HEK293 (cell line): ENCODE measurements at regions of chr14 and their contacts with region 1.

Region 1: GRCh38 chr14:69879175-69880043 is at the start of gene SMOC1:
- H3K4me3 ChIP-seq: peak within 1 kb of the TSS; percentile 64
- H3K27ac ChIP-seq: peak within 1 kb of the TSS; percentile 100
- H3K4me1 ChIP-seq: peaks cover 28% of the 10 kb centered on the region
- CTCF ChIP-seq: peak; percentile 39

Region 2: GRCh38 chr14:69708586-69709174 is 170.7 kb before region 1 on chr14:
- CTCF ChIA-PET with region 1: no interaction called
- POLR2A ChIA-PET with region 1: no interaction called
- H3K4me3 ChIP-seq: no peak overlapping the region
- H3K27ac ChIP-seq: no peak overlapping the region
- H3K4me1 ChIP-seq: peaks cover 20% of the 10 kb centered on the region
- CTCF ChIP-seq: no peak

Region 3: DNA sequence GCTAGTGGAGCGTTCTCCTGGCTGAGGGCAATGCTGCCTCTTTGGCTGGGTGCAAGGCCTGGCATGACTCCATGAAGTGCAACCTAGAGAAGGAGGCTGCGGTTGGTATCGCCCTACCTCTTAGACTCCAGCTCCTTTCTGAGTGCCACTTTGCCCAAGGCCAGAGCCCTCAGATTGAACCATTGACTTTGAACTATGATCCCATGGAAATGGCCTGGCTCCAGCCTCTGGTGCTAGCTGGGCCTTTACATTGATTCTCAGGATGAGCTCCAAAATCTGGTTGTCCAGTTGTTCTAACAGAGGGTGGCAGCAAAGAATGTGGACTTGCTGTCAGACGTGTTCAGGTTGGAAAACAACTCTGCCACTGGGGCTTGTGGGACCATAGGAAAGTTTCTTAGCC is 16.3 kb before region 1 on chr14:
- CTCF ChIA-PET with region 1: interaction called, 20 read pairs
- POLR2A ChIA-PET with region 1: interaction called, 6 read pairs
- H3K4me3 ChIP-seq: no peak overlapping the region
- H3K27ac ChIP-seq: no peak overlapping the region
- H3K4me1 ChIP-seq: no peaks in the 10 kb centered on the region
- CTCF ChIP-seq: no peak

Region 4: GRCh38 chr14:69997849-69998248 is 118.4 kb after region 1 on chr14:
- CTCF ChIA-PET with region 1: interaction called, 6 read pairs
- POLR2A ChIA-PET with region 1: interaction called, 18 read pairs
- H3K4me3 ChIP-seq: no peak overlapping the region
- H3K27ac ChIP-seq: peak overlapping the region; percentile 80
- H3K4me1 ChIP-seq: peaks cover 40% of the 10 kb centered on the region
- CTCF ChIP-seq: no peak

Region 5: DNA sequence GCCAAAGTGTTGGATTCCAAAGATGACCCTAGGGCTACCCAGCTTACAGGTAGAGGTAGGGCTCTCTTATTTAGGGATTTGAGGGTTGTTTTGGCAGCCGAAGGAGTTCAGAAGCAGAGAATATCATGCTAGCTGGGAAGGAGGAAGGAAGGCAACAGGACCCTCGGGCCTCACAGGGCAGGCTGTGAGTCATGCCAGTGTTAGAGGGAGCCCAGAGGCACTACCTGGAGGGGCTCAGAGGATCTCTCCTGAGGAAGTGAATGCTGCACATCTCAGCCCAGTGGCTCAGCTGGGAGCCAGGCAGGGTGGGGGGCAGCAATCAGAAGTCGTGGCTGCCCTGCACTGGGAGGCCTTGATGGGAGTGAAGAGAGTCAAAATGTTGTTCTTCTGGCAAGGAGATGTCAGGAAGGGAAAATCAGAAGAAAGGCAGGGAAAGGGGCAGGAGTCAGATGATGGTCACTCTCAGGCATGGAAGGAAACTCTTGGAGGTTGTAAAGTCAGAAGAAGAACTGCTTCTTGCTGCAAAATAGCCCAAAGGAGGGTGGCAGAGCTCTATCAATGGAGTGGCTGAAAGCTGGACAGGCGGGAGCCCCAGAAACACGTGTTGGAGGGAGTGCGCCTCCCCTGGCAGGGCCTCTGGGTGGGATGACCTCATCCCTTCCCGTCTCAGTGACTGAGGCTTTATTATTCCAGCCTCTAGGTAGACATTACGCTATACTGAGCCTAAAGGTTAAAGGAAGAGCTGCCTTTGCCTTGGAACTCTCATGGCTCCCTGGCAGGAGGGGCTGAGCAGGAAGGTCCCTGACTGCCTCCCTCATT is 141.2 kb after region 1 on chr14:
- CTCF ChIA-PET with region 1: interaction called, 9 read pairs
- POLR2A ChIA-PET with region 1: interaction called, 11 read pairs
- H3K4me3 ChIP-seq: no peak overlapping the region
- H3K27ac ChIP-seq: peak overlapping the region; percentile 46
- H3K4me1 ChIP-seq: peaks cover 12% of the 10 kb centered on the region
- CTCF ChIP-seq: no peak

Region 6: DNA sequence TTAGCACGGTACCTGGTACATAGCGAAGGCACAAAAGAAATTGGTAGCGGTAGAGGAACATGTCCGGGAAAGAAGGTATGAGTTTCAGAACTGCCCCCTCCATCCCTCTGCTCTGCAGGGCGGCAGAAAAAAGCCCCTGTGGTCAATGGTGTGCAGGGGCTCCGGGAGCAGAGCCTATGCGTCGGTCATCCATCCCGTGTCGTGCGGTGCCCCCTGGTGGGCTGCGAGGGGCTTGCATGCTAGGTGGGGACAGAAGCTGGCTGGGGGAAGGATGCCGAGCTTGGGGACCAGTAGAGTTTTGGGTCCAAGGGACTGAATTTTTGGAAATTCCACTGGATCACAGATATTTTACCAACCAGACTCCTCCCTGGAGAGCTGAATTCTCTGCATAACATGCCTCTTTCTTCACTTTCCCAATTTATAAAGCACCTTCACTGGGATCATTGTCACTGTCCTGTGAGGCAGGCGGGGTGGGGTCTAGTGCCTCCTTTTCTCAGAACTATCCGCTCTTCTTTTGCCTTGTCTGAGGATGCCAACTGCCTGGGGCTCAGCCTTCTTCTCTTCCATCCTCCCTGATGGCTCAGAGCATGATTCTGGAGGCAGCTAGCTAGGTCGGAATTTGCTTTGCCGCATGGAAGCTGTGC is 148.5 kb after region 1 on chr14:
- CTCF ChIA-PET with region 1: interaction called, 73 read pairs
- POLR2A ChIA-PET with region 1: interaction called, 6 read pairs
- H3K4me3 ChIP-seq: no peak overlapping the region
- H3K27ac ChIP-seq: no peak overlapping the region
- H3K4me1 ChIP-seq: no peaks in the 10 kb centered on the region
- CTCF ChIP-seq: peak; percentile 75; the same call in 1 of the 2 replicates